ENCODE measurements at regions of chr17 and their contacts with region 1.

Region 1: DNA sequence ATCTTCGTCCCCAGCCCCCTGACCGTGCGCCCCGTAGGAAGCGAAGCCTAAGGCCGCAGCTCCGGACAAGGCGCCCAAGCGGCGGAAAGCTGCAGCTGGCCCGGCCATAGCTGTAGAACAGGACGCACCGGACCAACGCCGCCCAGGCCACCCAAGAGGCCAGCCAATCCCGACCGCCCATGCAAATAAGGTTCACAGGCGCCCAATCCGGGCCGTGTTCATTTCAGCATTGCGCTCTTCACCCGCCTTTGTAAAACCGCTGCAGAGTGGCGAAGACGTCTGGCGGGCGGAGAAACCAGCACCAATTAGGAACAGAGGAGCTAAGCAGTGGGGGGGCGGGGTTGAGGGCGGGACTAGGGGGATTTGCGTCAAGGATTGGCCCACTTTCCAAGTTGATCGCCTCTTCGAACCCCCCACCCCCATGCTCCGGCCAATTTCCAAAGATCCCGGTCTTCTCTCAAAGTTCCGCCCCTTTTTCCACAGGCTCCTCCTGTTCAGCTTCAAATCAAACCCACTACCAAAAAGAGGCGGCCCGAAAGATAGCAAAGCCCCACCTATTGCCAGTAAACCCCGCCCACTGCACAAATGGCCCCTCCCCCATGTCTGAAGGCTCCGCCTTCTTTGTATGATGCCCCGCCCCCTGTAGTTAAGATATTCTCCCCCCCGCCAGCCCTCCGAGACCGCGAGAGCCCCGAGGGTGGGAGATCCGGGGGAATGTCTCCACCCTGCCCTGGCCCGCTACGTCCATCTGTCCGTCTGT is at the start of gene TMEM256:
- DNase-seq: peak; percentile 100
- H3K4me3 ChIP-seq: peak within 1 kb of the TSS; percentile 70 to 93 (median 85)
- H3K27ac ChIP-seq: peak within 1 kb of the TSS; percentile 88 to 95 (median 92)
- H3K4me1 ChIP-seq: peaks cover 0 to 49% (median 34%) of the 10 kb centered on the region in 4 donors
- H3K27me3 ChIP-seq: no peaks in the 10 kb centered on the region
- CTCF ChIP-seq: no peak
- EP300 ChIP-seq: no peak
- POLR2A ChIP-seq: peak; percentile 90 to 97
- total RNA-seq, gene TMEM256: 19.0 to 152 (median 99.7) TPM

Region 2: GRCh38 chr17:6640536-6641373 is 763.4 kb before region 1 on chr17 and contains the starts of genes KIAA0753 and TXNDC17:
- intact Hi-C with region 1: loop called (anchors 10 kb)
- DNase-seq: peak; percentile 95
- H3K4me3 ChIP-seq: peak within 1 kb of the TSS; percentile 71 to 84 (median 80)
- H3K27ac ChIP-seq: peak within 1 kb of the TSS; percentile 80 to 88 (median 85)
- H3K4me1 ChIP-seq: peaks cover 0 to 39% (median 32%) of the 10 kb centered on the region in 4 donors
- H3K27me3 ChIP-seq: no peaks in the 10 kb centered on the region
- CTCF ChIP-seq: no peak
- EP300 ChIP-seq: no peak
- POLR2A ChIP-seq: peak; percentile 77 to 80
- total RNA-seq, gene KIAA0753: 14.1 to 18.3 (median 14.5) TPM
- total RNA-seq, gene TXNDC17: 37.3 to 152 (median 120) TPM

Region 3: GRCh38 chr17:7239091-7240027 is 164.8 kb before region 1 on chr17 and contains the start of gene PHF23:
- intact Hi-C with region 1: loop called (anchors 5 kb)
- DNase-seq: peak; percentile 100
- H3K4me3 ChIP-seq: peak within 1 kb of the TSS; percentile 95 to 100 (median 100)
- H3K27ac ChIP-seq: peak within 1 kb of the TSS; percentile 98 to 100 (median 99)
- H3K4me1 ChIP-seq: peaks cover 0 to 55% (median 54%) of the 10 kb centered on the region in 4 donors
- H3K27me3 ChIP-seq: no peaks in the 10 kb centered on the region
- CTCF ChIP-seq: no peak
- EP300 ChIP-seq: peak in 1 of 4 donors; percentile 62
- POLR2A ChIP-seq: peak; percentile 61 to 84
- total RNA-seq, gene PHF23: 23.1 to 45.4 (median 35.4) TPM

Region 4: DNA sequence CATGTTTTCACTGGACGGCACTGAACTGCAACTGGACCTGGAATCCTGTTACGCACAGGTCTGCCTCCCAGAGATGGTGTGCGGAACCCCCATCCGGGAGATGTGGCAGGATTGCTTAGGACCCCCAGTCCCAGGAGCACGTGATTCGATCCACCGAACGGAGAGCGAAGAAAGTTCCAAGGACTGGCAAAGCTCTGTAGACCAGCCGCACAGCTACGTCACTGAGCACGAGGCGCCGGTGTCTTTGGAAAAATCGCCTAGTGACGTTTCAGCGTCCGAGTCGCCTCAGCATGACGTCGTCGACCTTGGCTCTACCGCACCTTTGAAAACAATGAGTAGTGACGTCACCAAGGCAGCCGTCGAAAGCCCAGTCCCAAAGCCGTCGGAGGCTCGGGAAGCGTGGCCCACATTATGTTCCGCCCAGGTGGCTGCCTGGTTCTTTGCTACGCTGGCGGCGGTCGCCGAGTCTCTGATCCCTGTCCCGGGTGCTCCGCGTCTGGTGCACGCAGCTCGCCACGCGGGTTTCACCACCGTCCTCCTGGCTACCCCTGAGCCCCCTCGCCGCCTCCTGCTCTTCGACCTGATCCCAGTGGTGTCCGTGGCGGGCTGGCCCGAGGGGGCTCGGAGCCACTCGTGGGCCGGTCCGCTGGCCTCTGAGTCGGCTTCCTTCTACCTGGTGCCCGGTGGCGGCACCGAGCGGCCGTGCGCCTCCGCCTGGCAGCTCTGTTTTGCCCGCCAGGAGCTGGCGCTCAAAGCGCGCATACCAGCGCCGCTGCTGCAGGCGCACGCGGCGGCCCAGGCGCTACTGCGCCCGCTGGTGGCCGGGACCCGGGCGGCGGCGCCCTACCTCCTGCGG is 32.4 kb after region 1 on chr17:
- intact Hi-C with region 1: loop called (anchors 2 kb)
- DNase-seq: peak; percentile 87
- H3K4me3 ChIP-seq: peak overlapping the region in 3 of 4 donors; percentile 32 to 43 (median 37)
- H3K27ac ChIP-seq: peak overlapping the region; percentile 44 to 73 (median 58)
- H3K4me1 ChIP-seq: peaks cover 0 to 58% (median 51%) of the 10 kb centered on the region in 4 donors
- H3K27me3 ChIP-seq: peaks cover 44 to 71% (median 70%) of the 10 kb centered on the region in 3 donors
- CTCF ChIP-seq: peak; percentile 23 to 86 (median 68)
- EP300 ChIP-seq: no peak
- POLR2A ChIP-seq: no peak

Region 5: DNA sequence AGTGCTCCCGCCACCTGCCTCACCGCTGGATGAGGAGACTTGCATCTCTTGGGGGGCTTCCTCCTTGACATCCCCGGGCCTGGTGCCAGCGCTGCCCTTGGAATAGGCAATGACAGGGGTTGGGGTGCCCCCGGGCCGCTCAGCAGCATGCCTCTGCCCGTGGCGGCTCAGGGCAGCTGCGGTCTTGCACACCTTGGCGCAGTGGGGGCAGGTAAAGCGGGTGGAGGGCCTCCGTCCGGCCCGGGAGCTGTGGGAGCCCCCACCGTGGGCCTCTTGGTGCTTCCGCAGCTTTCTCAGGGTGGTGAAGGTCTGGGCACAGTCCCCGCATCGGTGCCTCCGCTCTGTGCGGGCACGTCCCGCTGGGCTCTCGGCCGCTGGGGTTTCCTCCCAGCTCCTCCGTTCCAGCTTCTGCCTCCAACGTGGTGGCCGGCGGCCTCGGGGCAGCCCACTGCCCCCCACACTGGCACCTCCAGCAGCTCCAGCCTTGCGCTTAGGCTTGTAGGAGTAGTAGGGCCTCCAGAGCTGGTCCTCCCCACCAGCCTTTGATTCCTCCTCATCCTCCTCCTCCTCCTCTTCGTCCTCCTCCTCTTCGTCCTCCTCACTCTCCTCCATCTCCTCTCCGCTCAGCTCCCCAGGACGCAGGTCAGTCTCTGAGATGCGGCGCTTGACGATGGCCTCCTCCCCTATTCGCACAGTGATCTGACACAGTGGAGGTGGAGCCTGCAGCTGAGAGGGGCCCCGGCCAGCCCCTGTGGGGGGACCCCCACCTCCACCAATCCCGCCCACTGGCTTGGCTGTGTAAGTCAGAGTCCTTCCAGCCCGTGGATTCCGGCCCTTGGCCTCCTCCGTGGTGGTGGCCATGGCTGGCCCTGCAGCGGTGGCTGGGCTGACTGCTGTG is 58.6 kb after region 1 on chr17:
- intact Hi-C with region 1: no loop called
- DNase-seq: no peak
- H3K4me3 ChIP-seq: no peak overlapping the region
- H3K27ac ChIP-seq: no peak overlapping the region
- H3K4me1 ChIP-seq: peaks cover 0 to 21% (median 18%) of the 10 kb centered on the region in 4 donors
- H3K27me3 ChIP-seq: no peaks in the 10 kb centered on the region
- CTCF ChIP-seq: no peak
- EP300 ChIP-seq: no peak
- POLR2A ChIP-seq: no peak

Region 6: DNA sequence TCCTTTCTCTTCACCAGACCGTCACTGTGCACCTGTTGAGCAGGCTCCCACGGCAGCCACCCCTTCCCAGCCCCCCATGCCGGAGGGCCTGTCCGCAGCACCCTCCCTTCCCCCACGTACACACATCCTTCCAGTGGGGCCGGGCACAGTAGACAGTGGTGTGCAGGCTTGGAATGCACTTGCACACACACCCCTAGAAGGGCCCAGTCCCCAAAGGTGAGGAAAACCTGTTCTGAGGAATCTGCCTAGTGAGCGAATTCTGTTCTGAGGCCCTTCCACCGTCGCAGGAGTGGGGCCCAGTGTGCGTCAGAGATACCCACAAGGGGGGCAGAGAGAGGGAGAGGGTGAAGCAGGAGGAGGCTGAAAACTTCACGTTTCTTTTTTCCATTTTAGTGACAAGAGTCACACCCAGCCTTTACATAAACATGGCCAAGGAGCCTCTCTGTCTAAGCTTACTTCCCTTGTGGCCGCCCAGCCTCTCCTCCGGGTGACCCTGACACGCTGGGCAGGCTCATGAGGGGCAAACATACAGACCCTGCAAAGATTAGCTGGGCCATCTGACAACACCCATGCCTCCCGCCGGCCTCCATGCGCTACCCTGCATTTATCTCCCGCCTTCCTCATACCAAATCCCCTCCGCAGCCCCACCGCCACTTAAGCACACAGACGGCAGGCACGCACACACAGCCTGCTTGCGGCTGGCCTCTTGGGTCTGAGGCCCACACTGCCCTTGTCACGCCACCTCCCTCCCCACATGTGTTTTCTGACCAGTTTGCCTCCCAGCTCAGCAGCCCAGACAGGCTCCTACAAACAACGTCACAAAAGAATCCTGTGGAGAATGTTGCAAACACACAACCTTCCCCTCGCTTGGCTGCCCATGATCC is 73.5 kb after region 1 on chr17:
- intact Hi-C with region 1: loop called (anchors 2 kb)
- DNase-seq: peak; percentile 82
- H3K4me3 ChIP-seq: peak overlapping the region; percentile 61 to 100 (median 96)
- H3K27ac ChIP-seq: peak overlapping the region; percentile 94 to 100 (median 100)
- H3K4me1 ChIP-seq: peaks cover 0 to 79% (median 61%) of the 10 kb centered on the region in 4 donors
- H3K27me3 ChIP-seq: no peaks in the 10 kb centered on the region
- CTCF ChIP-seq: no peak
- EP300 ChIP-seq: no peak
- POLR2A ChIP-seq: no peak

Region 7: GRCh38 chr17:7484067-7484918 is 80.1 kb after region 1 on chr17 and contains the start of gene POLR2A:
- intact Hi-C with region 1: loop called (anchors 2 kb)
- DNase-seq: peak; percentile 100
- H3K4me3 ChIP-seq: peak within 1 kb of the TSS; percentile 63 to 72 (median 64)
- H3K27ac ChIP-seq: peak within 1 kb of the TSS; percentile 94 to 100 (median 97)
- H3K4me1 ChIP-seq: peaks cover 0 to 74% (median 61%) of the 10 kb centered on the region in 4 donors
- H3K27me3 ChIP-seq: no peaks in the 10 kb centered on the region
- CTCF ChIP-seq: no peak
- EP300 ChIP-seq: peak in 2 of 4 donors; percentile 29 to 70
- POLR2A ChIP-seq: peak; percentile 100
- total RNA-seq, gene POLR2A: 30.1 to 43.2 (median 36.5) TPM